CD4-positive, alpha-beta T cell (primary cell): ENCODE measurements at regions of chr2 and their contacts with region 1.

Region 1: DNA sequence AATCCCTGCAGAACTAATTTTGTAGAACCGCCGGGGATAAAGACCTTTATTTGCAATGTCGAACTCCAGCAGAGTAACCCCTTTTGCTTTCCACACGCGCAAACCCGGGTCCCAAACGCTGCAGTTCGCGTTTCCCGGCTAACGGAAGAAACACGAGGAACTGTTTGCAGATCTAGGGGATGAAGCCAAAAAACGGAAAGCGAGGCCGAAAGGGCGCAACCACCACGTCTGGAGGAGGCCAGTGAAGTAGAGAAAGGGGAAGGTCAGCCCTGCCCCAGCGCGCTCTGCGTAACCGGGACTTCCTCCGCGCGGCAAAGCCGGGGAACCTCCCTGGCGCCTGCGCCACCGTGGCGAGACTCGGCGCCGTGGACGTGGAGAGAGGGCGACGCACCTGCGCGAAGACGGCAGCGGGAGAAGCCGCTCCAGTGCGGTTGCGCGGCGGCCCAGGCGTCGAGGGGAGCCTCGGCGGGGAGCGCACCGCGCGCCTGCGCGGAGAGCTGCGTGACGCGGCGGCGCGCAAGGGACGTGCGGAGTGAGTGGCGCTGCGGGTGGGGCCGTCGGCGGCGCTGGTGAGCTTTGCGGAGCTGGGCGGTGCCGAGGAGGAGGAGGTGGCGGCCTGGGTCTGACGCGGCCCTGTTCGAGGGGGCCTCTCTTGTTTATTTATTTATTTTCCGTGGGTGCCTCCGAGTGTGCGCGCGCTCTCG is at the start of gene PPP1CB:
- DNase-seq: peak; percentile 91 to 100 (median 96)
- ATAC-seq: peak; percentile 84
- H3K4me3 ChIP-seq: peak within 1 kb of the TSS; percentile 92
- H3K4me3 Mint-ChIP-seq: peak within 1 kb of the TSS; percentile 95
- H3K27ac ChIP-seq: peak within 1 kb of the TSS; percentile 98
- H3K27ac Mint-ChIP-seq: peak within 1 kb of the TSS; percentile 95
- H3K4me1 ChIP-seq: peaks cover 56% of the 10 kb centered on the region
- H3K4me1 Mint-ChIP-seq: peaks cover 73% of the 10 kb centered on the region
- H3K27me3 ChIP-seq: no peaks in the 10 kb centered on the region
- H3K27me3 Mint-ChIP-seq: no peaks in the 10 kb centered on the region
- CTCF ChIP-seq: peak; percentile 32
- total RNA-seq, gene PPP1CB: 290 to 304 TPM

Region 2: DNA sequence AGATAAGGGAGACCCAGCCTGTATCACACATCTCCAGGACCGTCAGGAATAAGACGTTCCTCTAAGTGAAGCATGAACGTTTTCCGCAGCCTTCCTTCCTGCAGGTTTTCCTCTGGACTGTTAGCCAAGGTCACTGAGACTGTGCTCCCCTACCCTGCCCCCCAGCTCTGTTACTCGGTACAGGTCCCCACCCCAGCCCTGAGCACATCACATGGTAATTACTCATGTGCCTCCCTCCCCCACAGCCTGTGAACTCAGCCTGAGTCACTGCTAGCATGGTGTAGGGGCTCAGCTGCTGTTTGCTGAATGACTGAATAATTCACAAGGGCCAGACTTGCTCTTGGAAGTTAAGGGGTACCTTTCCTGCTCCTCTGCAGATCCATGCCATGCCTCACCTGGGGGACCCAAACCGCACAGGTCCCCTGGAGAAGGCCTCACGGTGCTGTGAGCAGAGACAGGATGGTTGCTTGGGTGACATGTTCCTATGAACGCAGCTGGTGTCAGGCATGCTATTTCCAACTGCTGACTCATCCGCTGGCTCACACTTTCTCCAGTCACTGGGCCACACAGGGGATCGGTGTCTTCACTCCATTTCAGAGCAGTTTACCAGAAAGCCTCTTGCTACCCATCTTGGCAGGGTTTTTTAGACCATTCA is 167.4 kb before region 1 on chr2:
- CTCF ChIA-PET with region 1: no interaction called
- POLR2A ChIA-PET with region 1: interaction called, 13 read pairs
- intact Hi-C with region 1: no loop called
- DNase-seq: peak in 9 of 14 experiments; percentile 17 to 69 (median 33)
- ATAC-seq: no peak
- H3K4me3 ChIP-seq: no peak overlapping the region
- H3K4me3 Mint-ChIP-seq: no peak overlapping the region
- H3K27ac ChIP-seq: no peak overlapping the region
- H3K27ac Mint-ChIP-seq: no peak overlapping the region
- H3K4me1 ChIP-seq: peaks cover 28% of the 10 kb centered on the region
- H3K4me1 Mint-ChIP-seq: peaks cover 25% of the 10 kb centered on the region
- H3K27me3 ChIP-seq: no peaks in the 10 kb centered on the region
- H3K27me3 Mint-ChIP-seq: no peaks in the 10 kb centered on the region
- CTCF ChIP-seq: no peak

Region 3: DNA sequence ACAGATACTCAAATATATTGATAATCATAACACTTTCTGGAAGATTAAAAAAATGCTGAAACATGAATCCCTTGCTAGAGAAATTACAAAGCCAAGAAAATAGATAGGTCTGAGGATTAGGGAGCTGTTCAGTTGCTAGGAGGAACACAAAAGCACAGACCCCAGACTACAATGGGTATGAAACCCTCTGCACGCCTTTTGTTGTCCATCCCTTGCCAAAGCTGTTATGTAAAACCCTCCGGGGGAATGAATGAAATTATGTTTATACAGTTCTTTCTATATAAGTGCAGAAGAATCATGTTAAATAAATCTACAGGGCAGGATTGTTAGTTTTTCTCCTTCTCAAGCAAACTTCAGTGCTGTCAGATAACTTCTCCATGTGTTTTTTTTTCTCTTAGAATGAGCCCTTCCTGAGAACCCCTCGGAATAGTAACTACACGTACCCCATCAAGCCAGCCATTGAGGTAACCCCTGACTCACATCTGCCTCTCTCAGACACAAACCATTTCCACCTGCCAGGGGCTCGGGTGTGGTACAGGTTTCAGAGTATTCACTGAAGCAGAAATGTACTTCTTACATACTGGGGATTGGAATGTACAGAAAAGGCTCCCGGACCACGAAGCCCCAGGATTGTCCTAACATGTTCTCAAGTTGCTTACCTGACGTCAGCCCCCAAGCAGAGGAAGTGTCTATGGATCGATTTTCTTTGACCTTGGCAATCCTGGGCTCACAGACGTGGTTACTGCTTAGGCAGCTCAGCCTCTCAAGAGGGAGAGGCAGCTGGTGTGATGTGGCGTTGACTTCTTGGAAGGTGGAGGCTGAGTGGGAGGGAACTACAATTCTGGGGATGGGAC is 137.5 kb before region 1 on chr2:
- CTCF ChIA-PET with region 1: interaction called, 5 read pairs
- POLR2A ChIA-PET with region 1: interaction called, 37 read pairs
- intact Hi-C with region 1: no loop called
- DNase-seq: peak in 9 of 14 experiments; percentile 19 to 60 (median 41)
- ATAC-seq: peak; percentile 45
- H3K4me3 ChIP-seq: no peak overlapping the region
- H3K4me3 Mint-ChIP-seq: no peak overlapping the region
- H3K27ac ChIP-seq: peak overlapping the region; percentile 58 to 71
- H3K27ac Mint-ChIP-seq: no peak overlapping the region
- H3K4me1 ChIP-seq: peaks cover 73% of the 10 kb centered on the region
- H3K4me1 Mint-ChIP-seq: peaks cover 33% of the 10 kb centered on the region
- H3K27me3 ChIP-seq: no peaks in the 10 kb centered on the region
- H3K27me3 Mint-ChIP-seq: no peaks in the 10 kb centered on the region
- CTCF ChIP-seq: no peak

Region 4: GRCh38 chr2:28780496-28780895 is 29.1 kb after region 1 on chr2:
- CTCF ChIA-PET with region 1: interaction called, 3 read pairs
- POLR2A ChIA-PET with region 1: interaction called, 5 read pairs
- intact Hi-C with region 1: loop called in 1 of 2 experiments (anchors 5 kb)
- DNase-seq: no peak
- ATAC-seq: no peak
- H3K4me3 ChIP-seq: no peak overlapping the region
- H3K4me3 Mint-ChIP-seq: no peak overlapping the region
- H3K27ac ChIP-seq: no peak overlapping the region
- H3K27ac Mint-ChIP-seq: no peak overlapping the region
- H3K4me1 ChIP-seq: peaks cover 4% of the 10 kb centered on the region
- H3K4me1 Mint-ChIP-seq: peaks cover 37% of the 10 kb centered on the region
- H3K27me3 ChIP-seq: no peaks in the 10 kb centered on the region
- H3K27me3 Mint-ChIP-seq: no peaks in the 10 kb centered on the region
- CTCF ChIP-seq: no peak

Region 5: DNA sequence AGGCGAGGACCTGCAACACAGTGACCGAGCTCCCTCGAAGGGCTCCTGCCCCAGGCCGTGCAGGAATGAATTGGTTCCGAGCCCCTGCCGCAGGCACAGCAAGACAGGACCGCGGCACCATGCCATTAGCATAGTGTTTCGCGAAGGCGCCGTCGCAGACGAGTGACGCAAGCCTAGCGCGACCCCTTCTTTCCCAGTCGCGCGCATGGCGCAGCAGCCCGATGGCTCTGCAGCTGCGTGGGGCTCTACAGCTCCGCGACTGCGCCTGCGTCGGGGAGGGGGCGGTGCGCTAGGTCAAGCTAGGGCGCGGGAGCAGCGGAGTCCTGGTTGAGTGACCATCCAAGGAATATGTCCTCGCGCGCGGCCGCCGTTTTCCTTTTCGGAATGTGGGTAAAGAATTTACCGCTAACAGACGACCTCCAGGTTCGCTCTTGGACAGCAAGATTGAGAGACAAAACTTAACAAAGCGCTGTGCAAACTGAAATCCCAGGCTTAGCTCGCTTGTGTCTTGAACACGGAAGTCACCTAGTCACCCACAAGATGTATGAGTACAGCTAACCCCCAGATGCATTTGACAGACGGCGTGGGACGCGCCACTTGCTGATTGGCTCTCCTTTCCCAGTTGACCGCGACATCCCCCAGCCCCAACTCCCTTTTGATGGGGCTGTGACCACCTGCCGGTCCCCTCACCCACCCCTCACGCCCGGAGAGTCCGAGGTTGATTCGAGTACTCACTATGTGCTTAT is 118.9 kb after region 1 on chr2 and contains the start of gene TRMT61B:
- CTCF ChIA-PET with region 1: no interaction called
- POLR2A ChIA-PET with region 1: interaction called, 20 read pairs
- intact Hi-C with region 1: loop called in 1 of 2 experiments (anchors 2 kb)
- DNase-seq: peak; percentile 92 to 99 (median 97)
- ATAC-seq: peak; percentile 92
- H3K4me3 ChIP-seq: peak within 1 kb of the TSS; percentile 88
- H3K4me3 Mint-ChIP-seq: peak within 1 kb of the TSS; percentile 99
- H3K27ac ChIP-seq: peak within 1 kb of the TSS; percentile 82 to 93
- H3K27ac Mint-ChIP-seq: peak within 1 kb of the TSS; percentile 99
- H3K4me1 ChIP-seq: peaks cover 41% of the 10 kb centered on the region
- H3K4me1 Mint-ChIP-seq: peaks cover 37% of the 10 kb centered on the region
- H3K27me3 ChIP-seq: no peaks in the 10 kb centered on the region
- H3K27me3 Mint-ChIP-seq: peaks cover 7% of the 10 kb centered on the region
- CTCF ChIP-seq: no peak
- total RNA-seq, gene TRMT61B: 18.7 to 20.8 TPM

Region 6: DNA sequence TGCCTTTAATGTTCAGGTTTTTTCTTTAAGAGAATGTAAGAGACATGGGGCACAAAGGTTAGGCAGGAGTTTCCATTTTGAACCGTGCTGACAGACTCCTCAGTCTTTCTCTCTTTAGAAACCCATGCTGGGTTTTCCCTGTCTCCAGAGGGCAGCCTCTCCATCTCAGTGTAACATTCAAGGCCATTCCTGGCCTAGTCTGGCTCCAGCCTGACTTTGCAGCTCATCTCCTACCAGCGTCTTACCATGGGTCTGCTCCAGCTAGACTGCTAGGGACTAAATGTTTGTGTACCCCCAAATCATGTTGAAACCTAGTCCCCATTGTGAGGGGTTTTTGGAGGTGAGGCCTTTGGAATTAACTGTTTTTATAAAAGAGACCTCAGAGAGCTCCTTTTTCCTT is 354.0 kb after region 1 on chr2:
- CTCF ChIA-PET with region 1: no interaction called
- POLR2A ChIA-PET with region 1: no interaction called
- intact Hi-C with region 1: no loop called
- DNase-seq: no peak
- ATAC-seq: no peak
- H3K4me3 ChIP-seq: no peak overlapping the region
- H3K4me3 Mint-ChIP-seq: no peak overlapping the region
- H3K27ac ChIP-seq: no peak overlapping the region
- H3K27ac Mint-ChIP-seq: no peak overlapping the region
- H3K4me1 ChIP-seq: no peaks in the 10 kb centered on the region
- H3K4me1 Mint-ChIP-seq: no peaks in the 10 kb centered on the region
- H3K27me3 ChIP-seq: no peaks in the 10 kb centered on the region
- H3K27me3 Mint-ChIP-seq: no peaks in the 10 kb centered on the region
- CTCF ChIP-seq: no peak